HEK293T (cell line): ENCODE measurements at regions of chr1 and their contacts with region 1.

Region 1: GRCh38 chr1:11907275-11908094 is 18.7 kb downstream of the KIAA2013 start:
- DNase-seq: peak; percentile 83

Region 2: GRCh38 chr1:11227106-11228077 is 680.1 kb before region 1 on chr1:
- CTCF ChIA-PET with region 1: no interaction called
- POLR2A ChIA-PET with region 1: no interaction called
- DNase-seq: no peak

Region 3: GRCh38 chr1:11693024-11693590 is 214.4 kb before region 1 on chr1:
- CTCF ChIA-PET with region 1: no interaction called
- POLR2A ChIA-PET with region 1: no interaction called
- DNase-seq: no peak

Region 4: GRCh38 chr1:11838349-11839272 is 68.9 kb before region 1 on chr1:
- CTCF ChIA-PET with region 1: interaction called, 4 read pairs
- POLR2A ChIA-PET with region 1: interaction called, 11 read pairs
- DNase-seq: peak; percentile 91

Region 5: DNA sequence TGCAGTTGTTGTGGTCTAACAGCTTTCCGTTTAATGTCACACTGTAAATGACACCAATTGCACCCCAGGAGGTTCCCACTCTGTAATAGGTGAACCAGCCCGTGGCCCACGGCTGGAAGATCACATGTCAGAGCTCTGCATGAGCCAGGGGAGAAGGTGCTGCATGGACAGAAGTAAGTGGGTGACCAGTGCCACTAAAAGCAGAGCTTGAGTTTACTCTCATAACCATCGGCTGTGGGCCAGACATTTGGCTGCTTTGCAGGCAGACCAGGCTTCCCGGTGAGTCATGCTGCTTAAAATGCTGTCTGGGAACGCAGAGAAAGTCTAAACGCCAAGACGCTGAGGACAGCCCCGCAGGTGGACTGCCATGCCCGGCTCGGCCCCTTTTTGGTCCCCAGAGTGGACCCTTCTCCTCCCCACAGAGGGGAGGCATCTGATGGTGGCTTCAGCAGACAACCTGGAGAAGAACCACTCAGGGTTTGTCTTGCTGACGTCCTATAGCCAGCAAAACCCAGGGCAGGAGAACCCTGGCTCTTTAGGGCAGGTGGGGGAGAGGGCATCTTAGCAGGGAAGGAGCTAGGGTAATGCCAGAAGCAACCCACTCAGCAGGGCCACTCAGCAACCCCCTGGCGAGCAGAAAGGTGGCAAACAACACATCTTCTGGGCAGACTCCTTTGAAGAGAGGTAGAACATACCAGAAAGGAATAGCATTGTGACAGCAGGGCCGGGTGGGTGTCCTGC is 11.5 kb after region 1 on chr1:
- CTCF ChIA-PET with region 1: interaction called, 3 read pairs
- POLR2A ChIA-PET with region 1: interaction called, 23 read pairs
- DNase-seq: no peak

Region 6: GRCh38 chr1:11940260-11940921 is 32.9 kb after region 1 on chr1:
- CTCF ChIA-PET with region 1: no interaction called
- POLR2A ChIA-PET with region 1: interaction called, 45 read pairs
- DNase-seq: no peak

Region 7: DNA sequence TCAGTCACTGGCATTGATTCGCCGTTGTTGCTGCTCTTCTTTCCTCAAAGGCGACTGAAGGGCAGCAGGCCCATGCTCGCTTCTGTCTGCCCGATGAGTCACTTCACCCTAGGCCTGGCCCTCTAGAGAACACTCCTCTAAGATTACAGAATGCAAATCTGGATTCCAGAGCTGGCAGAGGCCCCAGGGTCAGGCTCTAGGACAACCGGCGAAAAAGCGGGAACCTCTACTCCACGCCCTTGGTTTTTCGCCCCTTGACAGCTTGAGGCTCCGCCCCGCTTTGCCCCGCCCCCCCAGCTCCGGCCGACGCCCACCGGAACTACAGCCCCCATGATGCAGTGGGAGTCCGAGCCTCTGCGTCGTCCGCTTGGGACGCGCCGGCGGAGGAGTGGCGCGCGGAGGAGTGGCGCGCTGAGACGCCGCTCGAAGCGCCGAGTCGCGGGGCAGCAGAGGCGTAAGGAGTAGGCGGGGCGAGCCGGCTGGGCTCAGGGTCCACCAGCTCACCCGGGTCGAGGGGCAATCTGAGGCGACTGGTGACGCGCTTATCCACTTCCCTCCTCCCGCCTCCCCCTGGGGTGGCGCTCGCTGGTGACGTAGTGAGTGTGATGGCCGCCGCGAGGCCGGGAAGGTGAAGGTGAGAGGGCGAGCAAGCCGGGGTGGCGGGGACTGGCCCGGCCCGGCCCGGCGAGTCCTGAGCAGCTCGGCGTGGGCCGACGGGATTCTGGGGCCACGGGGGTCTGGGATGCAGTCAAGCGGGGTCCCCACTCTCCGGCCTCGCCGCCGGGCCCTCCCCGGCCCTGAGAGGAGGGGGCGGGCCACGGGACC is 72.6 kb after region 1 on chr1 and contains the start of gene MFN2:
- CTCF ChIA-PET with region 1: no interaction called
- POLR2A ChIA-PET with region 1: interaction called, 57 read pairs
- DNase-seq: peak; percentile 96